ENCODE measurements at regions of chr3 and their contacts with region 1.

Region 1: DNA sequence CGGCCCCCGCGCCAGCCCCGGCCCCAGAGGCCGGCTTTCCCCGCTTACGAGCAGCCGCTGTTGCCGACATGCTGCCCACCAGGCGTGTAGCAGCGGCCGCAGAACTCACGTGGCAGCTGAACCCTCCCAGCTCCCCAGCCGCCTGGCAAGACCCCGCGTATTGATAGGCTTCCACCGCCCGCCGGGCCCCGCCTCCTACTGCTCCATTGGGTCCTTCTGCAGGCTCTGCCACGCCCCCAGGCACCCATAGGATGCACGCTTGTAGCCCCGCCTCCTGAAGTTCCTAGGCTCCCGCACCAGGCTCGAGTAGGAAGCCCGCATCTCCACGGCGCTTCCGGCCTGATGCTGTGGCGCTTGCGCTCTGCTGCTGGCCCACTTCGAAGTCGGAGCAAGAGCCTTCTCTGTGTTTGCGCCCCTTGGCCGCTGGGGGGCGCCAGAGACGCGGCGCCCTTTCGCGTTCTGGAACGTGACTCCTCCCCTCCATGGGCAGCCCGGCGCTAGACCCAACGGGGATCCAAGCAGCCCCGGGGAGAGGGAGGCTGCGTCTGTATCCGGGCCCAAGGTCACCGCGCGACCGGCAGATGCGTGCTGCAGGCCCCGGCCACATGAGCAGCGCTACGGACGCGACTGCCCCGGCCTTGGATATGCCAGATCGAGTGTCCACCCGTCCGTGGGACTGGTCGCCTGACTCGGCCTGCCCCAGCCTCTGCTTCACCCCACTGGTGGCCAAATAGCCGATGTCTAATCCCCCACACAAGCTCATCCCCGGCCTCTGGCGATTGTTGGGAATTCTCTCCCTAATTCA is at the starts of genes PARP3 and RRP9:
- DNase-seq: peak; percentile 99
- total RNA-seq, gene PARP3: 15.2 TPM
- total RNA-seq, gene RRP9: 9.7 TPM

Region 2: GRCh38 chr3:51974963-51975851 is 33.2 kb after region 1 on chr3 and contains the start of gene ABHD14A:
- intact Hi-C with region 1: loop called (anchors 1 kb)
- DNase-seq: peak; percentile 89
- total RNA-seq, gene ABHD14A: 12.5 TPM

Region 3: GRCh38 chr3:51995346-51996163 is 53.6 kb after region 1 on chr3 and contains the start of gene RPL29:
- intact Hi-C with region 1: loop called (anchors 1 kb)
- DNase-seq: peak; percentile 96
- total RNA-seq, gene RPL29: 466 TPM

Region 4: GRCh38 chr3:52144034-52144795 is 202.2 kb after region 1 on chr3:
- intact Hi-C with region 1: loop called (anchors 5 kb)
- DNase-seq: peak; percentile 89